ENCODE measurements at regions of chr19 and their contacts with region 1.

Region 1: GRCh38 chr19:17336872-17337722 is at the start of gene GTPBP3:
- DNase-seq: peak; percentile 95 to 98 (median 95)
- H3K4me3 ChIP-seq: peak within 1 kb of the TSS; percentile 94
- H3K4me3 Mint-ChIP-seq: peak within 1 kb of the TSS; percentile 83 to 94 (median 90)
- H3K27ac ChIP-seq: peak within 1 kb of the TSS; percentile 91
- H3K27ac Mint-ChIP-seq: peak within 1 kb of the TSS; percentile 84 to 99 (median 92)
- H3K4me1 ChIP-seq: peaks cover 24% of the 10 kb centered on the region
- H3K4me1 Mint-ChIP-seq: peaks cover 26 to 50% (median 33%) of the 10 kb centered on the region in 3 donors
- H3K27me3 ChIP-seq: no peaks in the 10 kb centered on the region
- H3K27me3 Mint-ChIP-seq: no peaks in the 10 kb centered on the region
- total RNA-seq, gene GTPBP3: 47.3 to 55.7 TPM

Region 2: GRCh38 chr19:17235618-17236377 is 101.3 kb before region 1 on chr19:
- CTCF ChIA-PET with region 1: no interaction called
- POLR2A ChIA-PET with region 1: interaction called, 11 read pairs
- DNase-seq: peak; percentile 65 to 84 (median 71)
- H3K4me3 ChIP-seq: peak overlapping the region; percentile 78
- H3K4me3 Mint-ChIP-seq: peak overlapping the region; percentile 63 to 82 (median 73)
- H3K27ac ChIP-seq: peak overlapping the region; percentile 64
- H3K27ac Mint-ChIP-seq: no peak overlapping the region
- H3K4me1 ChIP-seq: peaks cover 15% of the 10 kb centered on the region
- H3K4me1 Mint-ChIP-seq: peaks cover 4 to 7% (median 5%) of the 10 kb centered on the region in 3 donors
- H3K27me3 ChIP-seq: no peaks in the 10 kb centered on the region
- H3K27me3 Mint-ChIP-seq: peaks cover 0 to 3% of the 10 kb centered on the region in 2 donors

Region 3: GRCh38 chr19:17286255-17286654 is 50.8 kb before region 1 on chr19:
- CTCF ChIA-PET with region 1: no interaction called
- POLR2A ChIA-PET with region 1: no interaction called
- DNase-seq: no peak
- H3K4me3 ChIP-seq: no peak overlapping the region
- H3K4me3 Mint-ChIP-seq: no peak overlapping the region
- H3K27ac ChIP-seq: no peak overlapping the region
- H3K27ac Mint-ChIP-seq: no peak overlapping the region
- H3K4me1 ChIP-seq: peaks cover 9% of the 10 kb centered on the region
- H3K4me1 Mint-ChIP-seq: peaks cover 4 to 9% (median 4%) of the 10 kb centered on the region in 3 donors
- H3K27me3 ChIP-seq: no peaks in the 10 kb centered on the region
- H3K27me3 Mint-ChIP-seq: peaks cover 0 to 8% of the 10 kb centered on the region in 2 donors

Measured in CD8-positive, alpha-beta memory T cell (primary cell).